ENCODE measurements at regions of chr9 and their contacts with region 1.

Region 1: GRCh38 chr9:33139421-33140228 is 27.5 kb downstream of the B4GALT1 start:
- DNase-seq: no peak
- H3K4me3 Mint-ChIP-seq: no peak overlapping the region
- H3K27ac Mint-ChIP-seq: peak overlapping the region; percentile 78
- H3K4me1 Mint-ChIP-seq: peaks cover 76% of the 10 kb centered on the region
- H3K27me3 Mint-ChIP-seq: no peaks in the 10 kb centered on the region

Region 2: GRCh38 chr9:33106827-33107621 is 32.6 kb before region 1 on chr9:
- intact Hi-C with region 1: loop called (anchors 5 kb)
- DNase-seq: no peak
- H3K4me3 Mint-ChIP-seq: no peak overlapping the region
- H3K27ac Mint-ChIP-seq: peak overlapping the region; percentile 29
- H3K4me1 Mint-ChIP-seq: peaks cover 9% of the 10 kb centered on the region
- H3K27me3 Mint-ChIP-seq: no peaks in the 10 kb centered on the region

Region 3: DNA sequence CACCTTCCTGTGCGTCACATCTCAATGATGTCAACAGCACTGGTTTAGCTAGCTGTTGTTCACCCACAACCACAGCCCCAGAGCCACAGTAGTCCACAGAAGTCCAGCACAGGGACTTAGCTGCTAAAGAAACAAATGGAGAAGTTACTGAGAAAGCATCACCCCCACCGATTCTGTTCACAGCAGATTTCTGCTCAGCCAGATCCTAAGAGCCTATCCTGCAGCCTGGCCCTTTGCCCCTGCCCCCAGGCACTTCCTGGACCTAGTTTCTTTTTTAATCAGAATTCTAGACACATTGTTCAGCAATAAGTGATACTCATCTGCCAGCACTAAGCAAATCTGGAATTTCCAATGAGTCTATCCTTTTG is 20.1 kb after region 1 on chr9:
- intact Hi-C with region 1: loop called (anchors 1 kb)
- DNase-seq: peak; percentile 63
- H3K4me3 Mint-ChIP-seq: peak overlapping the region; percentile 82
- H3K27ac Mint-ChIP-seq: peak overlapping the region; percentile 96
- H3K4me1 Mint-ChIP-seq: peaks cover 86% of the 10 kb centered on the region
- H3K27me3 Mint-ChIP-seq: no peaks in the 10 kb centered on the region

Region 4: GRCh38 chr9:33202552-33203201 is 63.1 kb after region 1 on chr9:
- intact Hi-C with region 1: loop called (anchors 10 kb)
- DNase-seq: peak; percentile 49
- H3K4me3 Mint-ChIP-seq: no peak overlapping the region
- H3K27ac Mint-ChIP-seq: peak overlapping the region; percentile 38
- H3K4me1 Mint-ChIP-seq: peaks cover 14% of the 10 kb centered on the region
- H3K27me3 Mint-ChIP-seq: peaks cover 6% of the 10 kb centered on the region

Region 5: DNA sequence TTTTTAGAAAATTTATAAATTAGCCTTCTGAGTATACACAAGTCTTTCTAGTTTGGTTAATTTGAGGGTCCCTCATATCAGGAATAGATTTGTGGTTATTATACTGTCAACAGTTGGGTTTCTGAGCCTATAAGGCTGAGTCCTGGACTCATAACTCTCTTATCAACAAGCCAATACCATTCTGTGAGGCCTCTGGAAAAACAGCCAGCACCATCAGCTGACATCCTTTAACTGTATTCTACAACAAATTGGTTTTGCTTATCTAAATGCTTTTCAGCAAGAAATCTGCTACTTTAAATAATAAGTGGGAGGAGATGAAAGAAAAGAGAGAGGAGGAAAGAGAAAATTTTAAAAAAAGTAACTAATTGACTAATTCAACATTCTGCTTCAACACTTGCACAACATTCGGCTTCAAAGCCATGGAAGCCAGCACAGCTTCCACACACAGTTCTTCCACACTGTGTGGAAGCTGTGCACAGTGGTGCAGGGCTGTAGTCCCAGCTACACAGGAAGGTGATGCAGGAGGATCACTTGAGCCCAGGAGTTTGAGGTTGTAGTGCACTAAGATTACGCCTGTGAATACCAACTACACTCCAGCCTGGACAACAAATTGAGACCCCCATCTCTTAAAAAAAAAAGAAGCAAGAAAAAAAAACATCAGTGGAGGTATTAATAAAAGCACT is 824.6 kb after region 1 on chr9:
- intact Hi-C with region 1: no loop called
- DNase-seq: no peak
- H3K4me3 Mint-ChIP-seq: no peak overlapping the region
- H3K27ac Mint-ChIP-seq: no peak overlapping the region
- H3K4me1 Mint-ChIP-seq: peaks cover 4% of the 10 kb centered on the region
- H3K27me3 Mint-ChIP-seq: no peaks in the 10 kb centered on the region